ENCODE measurements at regions of chr17 and their contacts with region 1.

Region 1: DNA sequence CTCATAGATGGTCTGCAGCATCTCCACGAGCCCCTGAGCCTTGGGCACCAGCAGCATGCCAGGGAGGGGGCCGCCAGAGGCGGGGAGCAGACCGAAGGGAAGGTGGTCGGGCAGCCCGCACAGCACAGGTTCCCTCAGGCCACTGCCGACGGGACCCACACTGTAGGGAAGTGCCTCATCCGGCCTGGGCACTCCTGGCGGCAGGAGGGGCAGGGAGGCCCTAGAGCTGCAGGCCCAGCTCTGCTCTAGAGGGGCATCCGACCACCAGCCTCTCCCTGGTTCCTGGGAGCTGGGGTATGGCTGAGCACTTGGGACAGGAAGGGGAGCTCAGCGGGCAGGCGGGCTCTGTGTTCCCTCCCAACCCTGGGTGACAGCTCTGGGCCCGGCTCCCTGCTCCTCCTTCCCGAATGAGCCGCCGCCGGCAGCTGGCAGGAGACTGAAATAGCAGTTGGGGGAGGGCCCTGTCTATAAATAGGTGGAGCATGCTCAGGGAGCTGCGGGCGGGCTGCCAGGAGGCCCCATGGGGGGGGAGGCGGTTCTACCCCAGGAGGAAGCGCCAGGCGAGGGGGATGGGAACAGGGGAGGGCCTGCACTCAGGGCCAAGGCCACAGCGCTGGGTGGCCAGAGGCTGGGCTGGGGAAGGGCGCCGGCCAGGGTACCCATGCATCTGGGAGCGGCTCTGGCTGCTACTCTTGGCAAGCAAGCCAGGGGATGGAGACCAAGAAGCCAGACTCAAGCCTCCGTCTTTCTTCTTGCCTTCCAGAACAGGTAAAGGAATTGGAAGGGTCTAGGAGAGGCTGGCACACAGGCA is 12.4 kb downstream of the HDAC5 start:
- DNase-seq: peak; percentile 52
- ATAC-seq: peak; percentile 84
- H3K4me3 ChIP-seq: peak overlapping the region; percentile 84
- H3K27ac ChIP-seq: peak overlapping the region; percentile 82
- H3K4me1 ChIP-seq: peaks cover 18% of the 10 kb centered on the region
- H3K27me3 ChIP-seq: no peaks in the 10 kb centered on the region
- CTCF ChIP-seq: peak in 1 of 3 experiments; percentile 9; a peak in 1 of 6 replicates
- EP300 ChIP-seq: 0 out of 4 replicates have a peak, but pooled peaks of 1 of the 2 experiments have one; percentile 20
- POLR2A ChIP-seq: peak; percentile 67
- RAD21 ChIP-seq: no peak

Region 2: DNA sequence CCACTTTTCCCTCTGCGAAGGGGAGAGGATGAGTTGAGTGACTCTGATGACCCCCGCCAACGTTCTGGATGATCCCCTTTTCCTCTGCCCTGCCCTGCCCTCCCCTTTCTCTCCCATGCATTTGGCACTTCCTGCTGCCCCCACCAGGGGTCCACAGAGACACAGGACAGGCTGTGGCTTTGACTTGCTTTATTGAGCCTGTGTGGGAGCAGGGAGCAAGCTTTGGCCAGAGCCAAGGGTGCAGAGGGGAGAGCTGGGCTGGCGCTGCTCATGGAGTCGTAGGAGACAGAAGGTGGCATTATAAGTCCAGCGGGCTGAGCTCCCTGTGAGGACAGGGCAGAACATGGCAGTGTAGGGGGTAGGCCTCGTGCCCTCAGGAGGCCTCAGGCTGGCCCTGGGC is 170.4 kb before region 1 on chr17:
- CTCF ChIA-PET with region 1: interaction called, 32 read pairs
- POLR2A ChIA-PET with region 1: no interaction called
- RAD21 ChIA-PET with region 1: interaction called, 11 read pairs
- SMC1A ChIA-PET with region 1: interaction called, 22 read pairs
- in situ Hi-C with region 1: no loop called
- intact Hi-C with region 1: no loop called
- DNase-seq: no peak
- ATAC-seq: peak; percentile 50
- H3K4me3 ChIP-seq: no peak overlapping the region
- H3K27ac ChIP-seq: no peak overlapping the region
- H3K4me1 ChIP-seq: no peaks in the 10 kb centered on the region
- H3K27me3 ChIP-seq: no peaks in the 10 kb centered on the region; a peak in 1 of 4 replicates
- CTCF ChIP-seq: peak; percentile 37 to 59 (median 43); a peak in 5 of 6 replicates
- EP300 ChIP-seq: no peak
- POLR2A ChIP-seq: no peak
- RAD21 ChIP-seq: peak; percentile 41

Region 3: GRCh38 chr17:44044067-44044466 is 67.0 kb before region 1 on chr17:
- CTCF ChIA-PET with region 1: interaction called, 40 read pairs
- POLR2A ChIA-PET with region 1: no interaction called
- RAD21 ChIA-PET with region 1: interaction called, 9 read pairs
- SMC1A ChIA-PET with region 1: interaction called, 12 read pairs
- in situ Hi-C with region 1: no loop called
- intact Hi-C with region 1: no loop called
- DNase-seq: no peak
- ATAC-seq: no peak
- H3K4me3 ChIP-seq: no peak overlapping the region
- H3K27ac ChIP-seq: no peak overlapping the region
- H3K4me1 ChIP-seq: no peaks in the 10 kb centered on the region
- H3K27me3 ChIP-seq: no peaks in the 10 kb centered on the region
- CTCF ChIP-seq: no peak
- EP300 ChIP-seq: no peak
- POLR2A ChIP-seq: no peak
- RAD21 ChIP-seq: no peak

Region 4: DNA sequence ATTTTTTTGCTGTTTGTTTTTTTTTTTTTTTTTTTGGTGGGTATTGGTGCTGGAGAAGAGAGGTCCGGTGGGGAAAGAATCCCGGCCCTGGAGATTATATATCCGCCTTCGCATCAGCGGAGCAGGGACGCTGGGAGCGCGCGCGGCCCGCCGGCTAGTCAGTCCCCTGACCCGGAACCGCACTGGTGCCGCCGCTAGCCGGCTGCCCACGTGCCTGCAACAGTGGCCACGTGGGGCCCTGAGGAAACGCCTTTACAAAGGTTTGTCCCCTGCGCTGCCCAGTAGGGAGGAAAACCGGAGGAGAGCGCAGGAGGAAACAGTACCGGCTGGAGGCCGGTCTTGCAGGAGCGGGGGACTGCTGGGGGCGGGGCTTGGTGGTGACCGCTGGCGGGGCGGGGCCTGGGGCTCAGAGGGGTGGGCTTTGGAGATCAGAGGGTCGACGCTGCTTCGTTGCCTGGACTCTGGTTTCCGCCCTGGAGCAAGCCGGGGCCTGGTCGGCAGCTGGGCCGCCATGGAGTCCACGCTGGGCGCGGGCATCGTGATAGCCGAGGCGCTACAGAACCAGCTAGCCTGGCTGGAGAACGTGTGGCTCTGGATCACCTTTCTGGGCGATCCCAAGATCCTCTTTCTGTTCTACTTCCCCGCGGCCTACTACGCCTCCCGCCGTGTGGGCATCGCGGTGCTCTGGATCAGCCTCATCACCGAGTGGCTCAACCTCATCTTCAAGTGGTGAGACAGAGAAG is 40.4 kb before region 1 on chr17 and contains the start of gene G6PC3:
- CTCF ChIA-PET with region 1: interaction called, 5 read pairs
- POLR2A ChIA-PET with region 1: interaction called, 23 read pairs
- RAD21 ChIA-PET with region 1: interaction called, 3 read pairs
- SMC1A ChIA-PET with region 1: interaction called, 3 read pairs
- in situ Hi-C with region 1: no loop called
- intact Hi-C with region 1: loop called (anchors 5 kb)
- DNase-seq: peak; percentile 81
- ATAC-seq: peak; percentile 88
- H3K4me3 ChIP-seq: peak within 1 kb of the TSS; percentile 91
- H3K27ac ChIP-seq: peak within 1 kb of the TSS; percentile 80
- H3K4me1 ChIP-seq: 0 out of 2 replicates have a peak, but pooled peaks cover 3% of the 10 kb centered on the region
- H3K27me3 ChIP-seq: no peaks in the 10 kb centered on the region
- CTCF ChIP-seq: peak in 1 of 3 experiments; percentile 4; a peak in 1 of 6 replicates
- EP300 ChIP-seq: 0 out of 4 replicates have a peak, but pooled peaks of 1 of the 2 experiments have one; percentile 18
- POLR2A ChIP-seq: peak; percentile 83
- RAD21 ChIP-seq: 0 out of 2 replicates have a peak, but pooled peaks have one; percentile 20
- polyA plus RNA-seq, gene G6PC3: 13.0 to 18.2 TPM

Region 5: DNA sequence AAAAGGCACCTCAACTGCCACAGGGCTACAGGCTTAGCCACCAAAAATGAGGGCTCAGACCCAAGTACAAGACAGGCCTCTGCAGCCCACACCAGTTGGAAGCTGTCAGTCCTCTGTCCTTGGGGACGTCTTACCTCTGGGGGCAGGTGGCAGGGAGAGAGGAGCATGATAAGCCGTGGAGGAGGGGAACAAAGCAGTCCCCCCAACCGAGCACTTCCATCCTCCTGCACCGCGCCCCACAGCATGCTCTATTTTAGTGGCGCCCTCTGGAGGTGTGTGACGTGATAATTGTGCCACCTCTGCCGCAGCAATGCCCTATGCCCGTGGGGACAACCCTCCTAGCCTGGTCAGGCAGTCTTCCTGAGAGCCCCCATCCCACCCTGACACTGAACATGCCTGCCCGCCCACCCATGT is 26.9 kb before region 1 on chr17:
- CTCF ChIA-PET with region 1: interaction called, 16 read pairs
- POLR2A ChIA-PET with region 1: interaction called, 4 read pairs
- RAD21 ChIA-PET with region 1: interaction called, 3 read pairs
- SMC1A ChIA-PET with region 1: no interaction called
- in situ Hi-C with region 1: no loop called
- intact Hi-C with region 1: no loop called
- DNase-seq: no peak
- ATAC-seq: peak; percentile 76
- H3K4me3 ChIP-seq: no peak overlapping the region
- H3K27ac ChIP-seq: no peak overlapping the region
- H3K4me1 ChIP-seq: no peaks in the 10 kb centered on the region
- H3K27me3 ChIP-seq: no peaks in the 10 kb centered on the region
- CTCF ChIP-seq: peak; percentile 13 to 34 (median 30); a peak in 3 of 6 replicates
- EP300 ChIP-seq: no peak
- POLR2A ChIP-seq: no peak
- RAD21 ChIP-seq: no peak

Region 6: GRCh38 chr17:44123356-44124117 is 12.5 kb after region 1 on chr17 and contains the start of gene HDAC5:
- CTCF ChIA-PET with region 1: interaction called, 40 read pairs
- POLR2A ChIA-PET with region 1: interaction called, 34 read pairs
- RAD21 ChIA-PET with region 1: interaction called, 16 read pairs
- SMC1A ChIA-PET with region 1: interaction called, 9 read pairs
- in situ Hi-C with region 1: no loop called
- intact Hi-C with region 1: no loop called
- DNase-seq: peak; percentile 73
- ATAC-seq: peak; percentile 97
- H3K4me3 ChIP-seq: peak within 1 kb of the TSS; percentile 95
- H3K27ac ChIP-seq: peak within 1 kb of the TSS; percentile 59
- H3K4me1 ChIP-seq: peaks cover 8% of the 10 kb centered on the region; the same call in 1 of the 2 replicates
- H3K27me3 ChIP-seq: no peaks in the 10 kb centered on the region
- CTCF ChIP-seq: peak; percentile 53 to 69 (median 67)
- EP300 ChIP-seq: no peak
- POLR2A ChIP-seq: peak; percentile 71
- RAD21 ChIP-seq: peak; percentile 38; the same call in 1 of the 2 replicates
- polyA plus RNA-seq, gene HDAC5: 1.1 to 2.0 TPM

Region 7: GRCh38 chr17:44331249-44331760 is 220.3 kb after region 1 on chr17:
- CTCF ChIA-PET with region 1: interaction called, 4 read pairs
- POLR2A ChIA-PET with region 1: interaction called, 10 read pairs
- RAD21 ChIA-PET with region 1: no interaction called
- SMC1A ChIA-PET with region 1: no interaction called
- in situ Hi-C with region 1: no loop called
- intact Hi-C with region 1: no loop called
- DNase-seq: no peak
- ATAC-seq: peak; percentile 72
- H3K4me3 ChIP-seq: no peak overlapping the region
- H3K27ac ChIP-seq: no peak overlapping the region
- H3K4me1 ChIP-seq: peaks cover 14% of the 10 kb centered on the region
- H3K27me3 ChIP-seq: no peaks in the 10 kb centered on the region
- CTCF ChIP-seq: peak; percentile 69 to 85 (median 84)
- EP300 ChIP-seq: no peak
- POLR2A ChIP-seq: no peak
- RAD21 ChIP-seq: peak; percentile 83

Measured in GM12878 (cell line).